Activated CD8-positive, alpha-beta T cell treated with anti-CD3 and anti-CD28 coated beads for 36 hours (primary cell): ENCODE measurements at regions of chr11 and their contacts with region 1.

Region 1: DNA sequence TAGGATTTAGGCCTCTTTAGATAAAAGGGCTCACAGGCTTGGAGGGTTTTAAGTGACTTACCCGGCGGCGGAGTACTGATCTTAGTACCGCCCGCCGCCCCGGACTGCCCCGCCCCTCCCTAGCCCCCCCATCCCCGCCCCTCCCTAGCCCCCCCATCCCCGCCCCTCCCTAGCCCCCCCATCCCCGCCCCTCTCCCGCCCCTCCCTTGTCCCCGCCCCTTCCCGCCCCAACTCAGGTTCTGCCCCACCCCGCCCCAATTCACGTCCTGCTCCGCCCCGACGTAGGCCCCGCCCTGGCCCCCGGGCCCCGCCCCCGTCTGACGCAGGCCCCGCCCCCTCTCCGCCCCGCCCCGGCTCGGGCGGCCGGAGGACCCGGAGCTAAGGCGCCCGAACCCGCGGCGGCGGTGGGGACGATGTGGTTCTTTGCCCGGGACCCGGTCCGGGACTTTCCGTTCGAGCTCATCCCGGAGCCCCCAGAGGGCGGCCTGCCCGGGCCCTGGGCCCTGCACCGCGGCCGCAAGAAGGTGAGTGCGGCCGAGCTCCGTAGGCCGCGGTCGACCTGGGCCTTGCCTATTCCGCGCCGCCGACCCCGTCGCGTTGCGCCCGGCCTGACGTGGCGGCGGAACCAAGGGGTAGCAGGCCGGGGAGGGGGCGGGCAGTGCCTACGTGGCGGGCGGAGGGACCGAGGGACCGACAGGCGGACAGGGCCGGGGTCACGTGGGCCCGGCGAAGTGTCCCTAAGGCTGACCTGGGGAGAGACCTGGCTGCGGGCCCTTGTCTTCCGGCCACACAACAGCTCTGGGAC is at the start of gene SCYL1:
- DNase-seq: peak; percentile 79
- ATAC-seq: peak; percentile 93
- H3K4me3 Mint-ChIP-seq: peak within 1 kb of the TSS; percentile 93
- H3K27ac Mint-ChIP-seq: peak within 1 kb of the TSS; percentile 94
- H3K4me1 Mint-ChIP-seq: peaks cover 61% of the 10 kb centered on the region
- H3K27me3 Mint-ChIP-seq: no peaks in the 10 kb centered on the region
- CTCF ChIP-seq: no peak
- total RNA-seq, gene SCYL1: 71.5 to 76.8 TPM

Region 2: GRCh38 chr11:65274735-65275682 is 249.9 kb before region 1 on chr11:
- CTCF ChIA-PET with region 1: no interaction called
- POLR2A ChIA-PET with region 1: no interaction called
- intact Hi-C with region 1: no loop called
- DNase-seq: peak; percentile 40
- ATAC-seq: peak; percentile 45
- H3K4me3 Mint-ChIP-seq: no peak overlapping the region
- H3K27ac Mint-ChIP-seq: no peak overlapping the region
- H3K4me1 Mint-ChIP-seq: peaks cover 12% of the 10 kb centered on the region
- H3K27me3 Mint-ChIP-seq: no peaks in the 10 kb centered on the region
- CTCF ChIP-seq: peak; percentile 64

Region 3: DNA sequence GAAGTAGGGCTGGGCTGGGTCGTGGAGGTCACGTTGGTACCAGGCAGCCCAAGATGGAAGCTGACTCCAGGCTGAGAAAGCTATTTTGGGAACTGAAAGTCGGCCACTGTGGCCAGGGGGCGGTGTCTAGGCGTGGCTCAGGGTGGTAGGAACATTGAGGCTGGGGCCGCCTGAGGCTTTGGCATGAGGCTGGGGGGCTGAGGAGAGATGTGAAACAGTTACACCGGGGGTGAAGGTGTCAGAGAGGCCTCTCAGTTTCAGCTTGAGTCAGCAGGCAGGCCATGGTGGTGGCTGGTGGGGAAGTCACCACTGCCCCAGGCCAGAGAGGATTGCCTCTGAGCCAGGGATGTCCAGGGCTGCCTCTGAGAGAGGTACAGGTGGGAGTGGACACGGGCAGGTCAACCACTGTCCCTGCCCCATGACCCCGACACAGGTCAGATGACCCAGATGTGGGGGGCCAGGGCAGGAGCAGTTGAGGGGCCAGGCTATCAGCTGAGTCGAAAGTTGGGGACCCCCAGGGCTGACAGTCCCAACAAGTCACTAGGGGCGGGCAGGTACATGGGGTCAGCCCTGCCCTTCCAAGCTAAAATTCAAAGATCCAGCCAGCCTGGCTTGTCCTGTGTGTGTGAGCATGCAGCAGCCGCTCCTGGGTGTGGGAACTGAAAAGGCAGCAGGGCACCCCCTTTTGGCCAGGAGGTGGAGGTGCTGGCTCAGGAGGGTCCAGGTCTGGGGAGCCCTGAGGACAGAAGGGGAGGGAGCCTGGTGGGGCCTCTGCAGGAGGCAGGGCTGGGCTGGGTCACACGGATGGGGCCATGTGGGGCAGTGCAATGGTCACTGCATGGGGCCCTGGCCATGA is 63.5 kb after region 1 on chr11:
- CTCF ChIA-PET with region 1: interaction called, 13 read pairs
- POLR2A ChIA-PET with region 1: interaction called, 3 read pairs
- intact Hi-C with region 1: no loop called
- DNase-seq: peak; percentile 93
- ATAC-seq: peak; percentile 76
- H3K4me3 Mint-ChIP-seq: peak overlapping the region; percentile 36
- H3K27ac Mint-ChIP-seq: peak overlapping the region; percentile 94
- H3K4me1 Mint-ChIP-seq: peaks cover 40% of the 10 kb centered on the region
- H3K27me3 Mint-ChIP-seq: no peaks in the 10 kb centered on the region
- CTCF ChIP-seq: peak; percentile 75

Region 4: GRCh38 chr11:65630215-65630614 is 105.3 kb after region 1 on chr11:
- CTCF ChIA-PET with region 1: no interaction called
- POLR2A ChIA-PET with region 1: no interaction called
- intact Hi-C with region 1: no loop called
- DNase-seq: no peak
- ATAC-seq: no peak
- H3K4me3 Mint-ChIP-seq: no peak overlapping the region
- H3K27ac Mint-ChIP-seq: no peak overlapping the region
- H3K4me1 Mint-ChIP-seq: peaks cover 12% of the 10 kb centered on the region
- H3K27me3 Mint-ChIP-seq: no peaks in the 10 kb centered on the region
- CTCF ChIP-seq: no peak